Head of caudate nucleus (tissue), 42 donors: ENCODE measurements at regions of chr4 and their contacts with region 1.

Region 1: DNA sequence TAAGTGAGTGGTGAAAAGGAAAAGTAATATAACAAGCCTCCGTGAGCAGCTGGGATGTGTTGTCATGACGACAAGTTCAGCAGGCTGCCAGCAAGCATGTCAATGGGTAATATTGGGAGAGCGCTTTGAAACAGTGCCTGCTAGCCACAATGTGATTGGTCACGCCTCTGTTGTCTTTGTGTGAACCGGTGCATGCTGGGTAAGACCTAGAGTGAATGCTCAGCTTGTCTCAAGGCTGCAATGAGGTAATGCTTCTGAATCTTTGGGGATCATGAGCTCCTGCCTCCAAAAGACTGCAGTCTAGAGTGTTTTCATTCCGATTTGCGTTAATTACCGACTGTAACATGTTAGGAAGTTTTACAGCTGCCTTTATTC is 54.9 kb downstream of the STOX2 start:
- DNase-seq: peak; percentile 73 to 98 (median 94)

Region 2: DNA sequence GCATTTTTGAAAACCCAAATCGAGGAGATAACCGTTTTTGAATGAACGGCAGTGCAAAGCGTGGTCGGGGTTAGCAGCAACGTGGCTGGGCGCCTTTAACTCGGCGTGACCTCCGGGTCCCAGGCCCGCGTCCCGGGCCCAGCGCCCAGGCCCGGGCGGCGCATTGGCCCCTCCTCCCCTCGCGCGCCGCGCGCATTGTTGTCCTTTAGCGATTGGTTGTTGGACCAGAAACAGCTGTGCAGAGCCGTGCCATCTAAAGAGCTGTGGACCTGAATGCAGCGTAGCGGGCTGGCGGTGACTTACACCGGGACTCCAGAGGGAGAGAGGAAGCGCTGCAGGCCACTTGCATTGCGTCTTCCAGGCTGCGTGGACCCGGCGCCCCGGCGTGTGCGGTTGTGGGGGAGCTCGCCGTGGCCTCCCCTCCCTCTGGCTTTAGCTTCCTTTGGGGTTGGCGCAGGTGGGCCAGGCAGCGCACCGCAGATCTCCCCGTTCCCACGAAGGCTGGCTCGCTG is 54.9 kb before region 1 on chr4 and contains the start of gene STOX2:
- intact Hi-C with region 1: loop called (anchors 5 kb)
- DNase-seq: peak; percentile 78 to 93 (median 86)